Colonic mucosa (tissue), 4 donors: ENCODE measurements at regions of chr13 and their contacts with region 1.

Region 1: DNA sequence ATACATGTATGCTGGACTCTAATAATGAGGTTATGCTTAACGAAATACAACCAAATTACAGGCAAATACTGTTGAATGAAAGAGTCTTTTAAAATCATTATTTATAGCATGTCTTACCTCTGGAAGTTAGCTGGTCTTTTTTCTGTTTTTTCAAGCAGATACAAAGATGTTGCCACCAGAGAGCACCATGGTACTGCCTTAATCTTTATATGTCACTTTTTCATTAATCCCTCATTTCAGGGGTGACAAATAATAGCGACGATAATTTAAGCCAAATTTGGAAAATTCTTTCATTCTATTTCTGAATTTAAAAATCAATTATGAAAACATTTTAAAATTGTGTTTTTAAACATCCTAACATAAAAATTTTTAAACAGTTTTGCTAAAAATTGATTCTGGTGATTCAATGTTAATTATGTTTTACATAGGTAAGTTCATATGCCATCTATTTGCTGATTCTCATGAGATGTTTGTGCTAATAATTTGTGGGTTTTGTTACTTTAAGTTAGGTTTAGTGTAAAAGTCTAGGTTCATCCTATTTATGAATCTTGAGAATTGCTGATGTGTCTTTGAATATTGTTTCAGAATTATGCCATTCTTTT is 379.3 kb upstream of the SGCG start:
- DNase-seq: no peak
- H3K4me3 ChIP-seq: no peak overlapping the region
- H3K27ac ChIP-seq: no peak overlapping the region
- H3K4me1 ChIP-seq: no peaks in the 10 kb centered on the region
- H3K27me3 ChIP-seq: no peaks in the 10 kb centered on the region
- CTCF ChIP-seq: no peak

Region 2: GRCh38 chr13:22662771-22663170 is 138.7 kb before region 1 on chr13:
- intact Hi-C with region 1: no loop called
- DNase-seq: no peak
- H3K4me3 ChIP-seq: no peak overlapping the region
- H3K27ac ChIP-seq: no peak overlapping the region
- H3K4me1 ChIP-seq: no peaks in the 10 kb centered on the region
- H3K27me3 ChIP-seq: no peaks in the 10 kb centered on the region
- CTCF ChIP-seq: no peak

Region 3: DNA sequence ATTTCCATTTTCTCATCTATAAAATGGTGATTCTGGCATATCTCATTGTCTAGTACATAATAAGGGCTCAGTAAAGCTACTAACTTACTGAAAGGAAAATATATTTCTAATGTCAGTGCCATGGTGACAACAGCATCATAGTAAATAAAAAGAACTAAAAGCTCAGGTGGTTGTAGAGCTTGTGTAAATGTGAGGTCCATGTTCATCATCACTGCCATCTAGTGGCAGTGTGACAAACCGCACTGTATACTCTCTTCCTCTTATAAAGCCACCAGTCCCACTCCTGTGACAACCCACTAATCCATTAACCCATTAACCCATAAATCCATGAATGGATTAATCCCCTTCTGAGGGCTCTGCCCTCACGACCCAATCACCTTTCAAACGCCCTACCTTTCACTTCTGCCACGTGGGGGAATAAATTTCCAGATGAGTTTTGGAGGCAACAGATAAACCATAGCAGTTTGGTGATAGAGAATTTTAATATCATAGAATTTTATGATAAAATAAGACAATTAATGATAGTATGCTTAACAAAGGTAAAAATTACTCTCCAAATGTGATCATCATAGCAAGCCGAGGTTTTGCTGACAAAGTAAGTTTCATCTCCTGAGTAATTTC is 218.8 kb after region 1 on chr13:
- intact Hi-C with region 1: loop called (anchors 5 kb)
- DNase-seq: peak; percentile 35
- H3K4me3 ChIP-seq: no peak overlapping the region
- H3K27ac ChIP-seq: no peak overlapping the region
- H3K4me1 ChIP-seq: no peaks in the 10 kb centered on the region
- H3K27me3 ChIP-seq: no peaks in the 10 kb centered on the region
- CTCF ChIP-seq: peak; percentile 81